ENCODE measurements at regions of chr12 and their contacts with region 1.

Region 1: DNA sequence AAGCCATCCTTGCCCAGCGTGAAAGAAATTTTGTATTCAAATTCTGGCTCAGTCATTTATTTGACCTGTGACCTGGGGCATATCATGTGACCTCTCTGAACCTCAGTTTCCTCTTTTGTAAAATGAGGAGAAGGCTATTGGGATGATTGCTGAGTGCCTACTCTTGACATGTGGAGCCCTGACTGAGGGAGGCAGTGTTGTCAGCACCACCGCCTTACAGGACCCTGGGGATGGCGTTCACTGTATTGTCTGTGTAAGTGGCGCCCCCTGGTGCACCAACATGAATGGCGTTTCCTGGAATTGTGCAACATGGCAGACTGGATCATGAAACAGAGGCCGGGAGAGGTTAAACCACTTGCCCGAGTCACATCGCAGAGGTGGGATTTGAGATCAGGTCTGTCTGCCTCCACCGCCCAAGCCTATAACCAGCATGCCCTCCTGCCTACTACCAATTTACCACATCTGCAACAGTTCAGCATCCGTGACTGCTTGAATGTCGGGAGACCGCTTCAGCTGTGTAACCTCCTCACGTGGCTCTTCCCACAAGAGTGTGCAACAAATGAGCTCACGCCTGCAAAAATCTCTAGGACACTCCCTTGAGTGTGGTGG is 20.1 kb upstream of the CCDC63 start:
- DNase-seq: peak; percentile 80 to 97 (median 90)
- H3K4me3 ChIP-seq: no peak overlapping the region
- H3K27ac ChIP-seq: no peak overlapping the region
- H3K4me1 ChIP-seq: no peaks in the 10 kb centered on the region
- H3K27me3 ChIP-seq: no peaks in the 10 kb centered on the region
- CTCF ChIP-seq: peak; percentile 82 to 97 (median 94)
- POLR2A ChIP-seq: no peak

Region 2: DNA sequence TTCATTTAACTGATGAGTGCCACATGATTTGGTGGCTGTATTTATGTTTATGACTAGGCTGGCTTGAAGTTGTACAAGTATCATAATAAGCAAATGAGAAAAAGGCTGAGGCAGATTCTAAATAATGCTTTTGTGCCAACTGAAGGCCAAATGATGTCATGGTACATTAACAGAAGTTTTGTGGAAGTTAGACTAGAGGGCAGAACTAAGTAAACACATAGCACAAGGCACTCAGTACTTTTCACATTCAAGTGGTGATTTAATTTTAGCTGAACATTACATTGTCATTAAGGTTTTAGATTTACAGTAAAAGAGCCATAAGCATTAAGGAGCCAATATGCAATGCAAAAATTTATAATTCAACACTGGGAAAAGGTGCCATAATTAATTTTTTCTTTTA is 105.1 kb before region 1 on chr12:
- intact Hi-C with region 1: no loop called
- DNase-seq: no peak
- H3K4me3 ChIP-seq: no peak overlapping the region
- H3K27ac ChIP-seq: no peak overlapping the region
- H3K4me1 ChIP-seq: peaks cover 0 to 10% of the 10 kb centered on the region in 2 donors
- H3K27me3 ChIP-seq: no peaks in the 10 kb centered on the region
- CTCF ChIP-seq: no peak
- POLR2A ChIP-seq: no peak

Region 3: DNA sequence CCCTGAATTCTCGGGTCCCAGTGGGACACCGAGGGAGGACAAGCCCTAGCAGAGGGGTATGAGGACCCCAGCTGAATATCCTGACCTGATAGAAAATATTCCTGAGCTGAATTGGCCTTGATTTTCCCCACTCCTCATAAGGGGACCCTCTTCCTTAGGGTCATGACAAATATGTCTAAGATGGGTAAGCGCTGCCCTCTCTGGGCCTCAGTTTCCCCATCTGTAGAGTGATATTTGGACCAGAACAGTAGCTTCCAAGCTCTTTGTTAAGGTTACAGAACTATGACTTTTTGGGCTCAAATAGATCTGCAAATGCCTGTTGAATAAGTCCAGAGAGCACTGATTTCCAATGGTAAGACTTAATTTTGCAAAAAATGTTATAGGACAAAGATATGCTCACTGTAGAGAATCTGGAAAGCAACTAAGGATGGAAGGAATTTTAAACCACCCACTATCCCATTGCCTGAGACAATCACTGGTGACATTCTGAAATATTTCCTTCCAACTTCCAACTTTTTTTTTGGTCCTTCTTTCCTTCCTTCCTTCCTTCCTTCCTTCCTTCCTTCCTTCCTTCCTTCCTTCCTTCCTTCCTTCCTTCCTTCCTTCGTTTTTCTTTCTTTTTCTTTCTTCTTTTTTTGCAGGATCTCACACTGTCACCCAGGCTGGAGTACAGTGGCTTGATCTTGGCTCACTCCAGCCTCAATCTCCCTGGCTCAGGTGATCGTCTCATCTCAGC is 61.7 kb after region 1 on chr12:
- intact Hi-C with region 1: loop called in 1 of 2 experiments (anchors 5 kb)
- DNase-seq: no peak
- H3K4me3 ChIP-seq: no peak overlapping the region
- H3K27ac ChIP-seq: no peak overlapping the region
- H3K4me1 ChIP-seq: no peaks in the 10 kb centered on the region
- H3K27me3 ChIP-seq: no peaks in the 10 kb centered on the region
- CTCF ChIP-seq: no peak
- POLR2A ChIP-seq: no peak

Region 4: DNA sequence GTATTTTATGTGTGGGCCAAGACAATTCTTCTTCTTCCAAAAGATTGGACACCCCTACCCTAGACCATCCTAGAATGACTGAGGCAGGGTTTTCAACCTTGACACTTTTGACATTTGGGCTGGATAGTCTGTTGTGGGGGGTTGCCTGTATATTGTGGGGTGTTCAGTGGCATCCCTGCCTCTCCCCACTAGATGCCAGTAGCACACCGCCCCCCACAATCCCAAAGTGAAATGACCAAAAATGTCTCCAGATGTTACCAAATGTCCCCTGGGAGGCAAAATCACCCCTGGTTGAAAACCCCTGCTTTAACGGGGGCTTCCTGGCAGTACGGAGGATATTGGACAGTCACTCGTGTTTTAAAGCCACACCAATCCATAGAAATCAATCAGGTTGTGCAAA is 322.6 kb after region 1 on chr12:
- intact Hi-C with region 1: no loop called
- DNase-seq: no peak
- H3K4me3 ChIP-seq: no peak overlapping the region
- H3K27ac ChIP-seq: no peak overlapping the region
- H3K4me1 ChIP-seq: no peaks in the 10 kb centered on the region
- H3K27me3 ChIP-seq: peaks cover 11% of the 10 kb centered on the region
- CTCF ChIP-seq: no peak
- POLR2A ChIP-seq: no peak

Measured in adrenal gland (tissue), 19 donors.